Naive thymus-derived CD4-positive, alpha-beta T cell (primary cell): ENCODE measurements at regions of chr20 and their contacts with region 1.

Region 1: DNA sequence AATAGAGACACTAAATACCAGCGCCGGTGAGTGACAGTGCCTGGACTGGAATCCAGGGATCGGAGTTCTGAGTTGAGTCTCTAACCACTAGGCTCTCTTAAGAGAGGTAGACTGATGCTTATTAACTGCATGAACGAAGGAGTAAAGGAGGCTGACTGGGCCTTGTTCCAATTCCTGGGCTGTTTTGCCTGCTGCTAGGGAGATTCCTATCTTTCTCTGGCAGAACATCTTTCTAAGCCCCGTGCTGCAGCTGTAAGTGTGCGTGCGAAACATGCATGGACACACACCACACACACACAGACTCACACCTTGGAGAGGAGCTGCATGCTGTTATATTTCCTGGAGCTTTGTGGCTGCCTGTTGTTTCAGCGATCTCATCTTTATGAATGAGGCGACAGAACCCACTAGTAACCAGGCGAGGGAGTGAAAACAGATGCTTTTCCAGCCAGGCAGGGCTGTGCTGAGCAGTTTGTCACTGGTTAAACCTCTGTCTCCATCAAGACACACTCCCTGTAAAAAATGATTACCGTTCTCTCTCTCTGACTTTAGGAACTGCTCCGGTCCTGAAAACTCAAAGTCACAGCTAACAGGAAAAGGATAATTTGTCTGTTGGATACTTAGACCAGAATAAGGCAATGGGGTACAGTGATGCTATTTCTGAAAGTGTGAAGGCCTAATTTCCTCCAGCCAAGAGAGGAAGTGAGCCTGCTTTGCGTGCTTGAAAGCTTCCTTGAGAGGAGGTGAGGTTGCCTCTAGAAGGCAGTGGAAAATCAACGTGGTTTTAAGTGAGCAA is 157.4 kb upstream of the ZNF217 start:
- DNase-seq: peak in 8 of 9 donors; percentile 21 to 60 (median 40)
- ATAC-seq: peak; percentile 61
- H3K4me3 ChIP-seq: no peak overlapping the region
- H3K4me3 Mint-ChIP-seq: peak overlapping the region; percentile 51 to 84 (median 68)
- H3K27ac ChIP-seq: peak overlapping the region; percentile 63
- H3K27ac Mint-ChIP-seq: peak overlapping the region; percentile 91 to 99 (median 96)
- H3K4me1 ChIP-seq: peaks cover 53 to 66% of the 10 kb centered on the region in 2 donors
- H3K4me1 Mint-ChIP-seq: peaks cover 45 to 77% (median 72%) of the 10 kb centered on the region in 7 donors
- H3K27me3 ChIP-seq: no peaks in the 10 kb centered on the region
- H3K27me3 Mint-ChIP-seq: no peaks in the 10 kb centered on the region

Region 2: DNA sequence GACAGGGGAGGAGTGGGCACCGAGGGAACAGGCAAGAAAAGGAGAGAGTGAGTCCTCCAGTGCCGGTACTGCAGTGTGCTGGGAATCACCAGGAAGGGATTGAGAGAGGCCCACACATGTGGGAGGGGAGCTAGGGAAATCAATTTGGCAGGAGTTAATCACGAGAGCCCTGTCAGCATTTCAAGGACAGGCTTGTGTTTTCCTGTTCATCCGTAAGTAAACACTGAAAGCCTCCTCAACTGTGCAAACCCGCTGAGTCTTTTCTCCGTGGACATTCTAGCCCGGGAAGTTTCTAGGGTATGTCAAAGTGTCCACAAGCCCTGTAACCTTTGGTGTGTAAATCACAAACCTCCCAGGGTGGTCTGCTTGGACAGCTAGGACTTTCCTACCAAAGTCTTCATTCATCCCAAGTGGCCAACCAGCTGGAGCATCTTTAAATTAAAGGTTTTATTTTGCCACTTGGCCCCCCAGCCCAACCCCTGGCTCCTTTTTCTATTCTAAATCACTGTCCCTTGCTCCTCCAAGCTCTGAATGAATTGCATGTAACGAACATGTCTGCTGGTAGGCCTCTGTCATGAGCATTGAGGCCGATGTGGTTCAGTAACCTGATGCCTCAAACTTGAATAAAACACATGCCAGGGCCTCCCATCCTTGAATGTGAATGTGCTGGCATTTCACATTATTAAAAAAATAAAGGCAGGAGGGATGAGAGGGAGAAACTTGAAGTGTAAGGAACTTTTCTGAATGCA is 306.4 kb before region 1 on chr20:
- CTCF ChIA-PET with region 1: no interaction called
- POLR2A ChIA-PET with region 1: no interaction called
- intact Hi-C with region 1: no loop called
- DNase-seq: no peak
- ATAC-seq: no peak
- H3K4me3 ChIP-seq: no peak overlapping the region
- H3K4me3 Mint-ChIP-seq: no peak overlapping the region
- H3K27ac ChIP-seq: no peak overlapping the region
- H3K27ac Mint-ChIP-seq: no peak overlapping the region
- H3K4me1 ChIP-seq: no peaks in the 10 kb centered on the region
- H3K4me1 Mint-ChIP-seq: peaks cover 0 to 10% (median 0%) of the 10 kb centered on the region in 7 donors
- H3K27me3 ChIP-seq: no peaks in the 10 kb centered on the region
- H3K27me3 Mint-ChIP-seq: no peaks in the 10 kb centered on the region

Region 3: GRCh38 chr20:53578492-53579222 is 172.4 kb before region 1 on chr20:
- CTCF ChIA-PET with region 1: interaction called, 6 read pairs
- POLR2A ChIA-PET with region 1: interaction called, 4 read pairs
- intact Hi-C with region 1: loop called (anchors 1 kb)
- DNase-seq: peak in 8 of 9 donors; percentile 44 to 85 (median 80)
- ATAC-seq: peak; percentile 85
- H3K4me3 ChIP-seq: peak overlapping the region; percentile 49
- H3K4me3 Mint-ChIP-seq: peak overlapping the region; percentile 79 to 98 (median 86)
- H3K27ac ChIP-seq: peak overlapping the region; percentile 70
- H3K27ac Mint-ChIP-seq: peak overlapping the region; percentile 83 to 98 (median 94)
- H3K4me1 ChIP-seq: peaks cover 53 to 60% of the 10 kb centered on the region in 2 donors
- H3K4me1 Mint-ChIP-seq: peaks cover 41 to 99% (median 91%) of the 10 kb centered on the region in 7 donors
- H3K27me3 ChIP-seq: no peaks in the 10 kb centered on the region
- H3K27me3 Mint-ChIP-seq: no peaks in the 10 kb centered on the region

Region 4: GRCh38 chr20:53643031-53643832 is 107.8 kb before region 1 on chr20:
- CTCF ChIA-PET with region 1: no interaction called
- POLR2A ChIA-PET with region 1: interaction called, 5 read pairs
- intact Hi-C with region 1: loop called in 1 of 2 experiments (anchors 2 kb)
- DNase-seq: peak in 8 of 9 donors; percentile 61 to 81 (median 75)
- ATAC-seq: peak; percentile 98
- H3K4me3 ChIP-seq: peak overlapping the region; percentile 56
- H3K4me3 Mint-ChIP-seq: peak overlapping the region; percentile 73 to 92 (median 85)
- H3K27ac ChIP-seq: peak overlapping the region; percentile 77
- H3K27ac Mint-ChIP-seq: peak overlapping the region; percentile 90 to 100 (median 97)
- H3K4me1 ChIP-seq: peaks cover 13 to 45% of the 10 kb centered on the region in 2 donors
- H3K4me1 Mint-ChIP-seq: peaks cover 30 to 64% (median 52%) of the 10 kb centered on the region in 7 donors
- H3K27me3 ChIP-seq: no peaks in the 10 kb centered on the region
- H3K27me3 Mint-ChIP-seq: no peaks in the 10 kb centered on the region

Region 5: DNA sequence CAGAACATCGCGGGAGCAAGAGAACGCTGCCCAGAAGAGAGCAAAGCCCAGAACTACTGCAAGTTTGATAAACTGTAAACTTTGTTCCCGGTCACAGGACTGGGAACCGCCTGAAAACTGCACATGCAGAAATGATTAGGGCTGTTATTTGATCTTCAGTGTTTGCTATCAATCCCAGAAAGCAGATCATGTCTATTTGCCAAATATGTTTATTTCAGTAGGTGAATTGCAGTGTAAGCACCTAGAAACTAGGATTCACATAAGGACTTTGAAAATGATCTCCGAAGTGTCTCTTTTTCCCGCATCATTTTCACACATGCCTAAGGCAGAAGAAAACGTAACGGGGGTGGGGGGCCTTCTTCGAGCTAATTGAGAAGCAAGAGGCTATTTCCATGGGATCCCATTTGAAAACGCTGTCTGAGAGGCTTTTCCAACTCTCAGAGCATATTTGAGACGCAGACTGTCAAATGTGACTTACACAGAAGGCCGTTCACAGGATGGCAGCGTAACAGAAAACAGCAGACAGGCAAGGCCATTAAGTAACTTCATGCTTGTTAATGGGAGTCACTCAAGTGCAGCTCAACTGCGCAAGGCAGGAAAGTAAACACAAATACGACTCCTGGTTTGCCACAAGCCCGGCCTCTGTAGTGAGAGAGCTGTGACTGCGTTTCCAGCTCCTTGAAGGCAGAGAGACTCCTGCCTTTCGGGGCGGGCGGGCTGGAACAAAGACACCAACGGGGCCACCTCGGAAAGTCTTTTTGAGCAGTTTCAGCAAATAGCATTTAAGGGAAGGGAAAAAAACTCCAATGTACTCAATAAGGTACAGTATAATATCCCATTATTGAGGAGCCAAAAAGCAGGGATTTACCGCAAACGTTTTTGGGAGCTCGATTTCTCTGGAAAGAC is 12.7 kb before region 1 on chr20:
- CTCF ChIA-PET with region 1: interaction called, 3 read pairs
- POLR2A ChIA-PET with region 1: interaction called, 8 read pairs
- intact Hi-C with region 1: loop called in 1 of 2 experiments (anchors 1 kb)
- DNase-seq: no peak
- ATAC-seq: no peak
- H3K4me3 ChIP-seq: no peak overlapping the region
- H3K4me3 Mint-ChIP-seq: peak overlapping the region in 1 of 10 donors; percentile 70
- H3K27ac ChIP-seq: no peak overlapping the region
- H3K27ac Mint-ChIP-seq: peak overlapping the region in 5 of 9 donors; percentile 8 to 87 (median 43)
- H3K4me1 ChIP-seq: peaks cover 0 to 14% of the 10 kb centered on the region in 2 donors
- H3K4me1 Mint-ChIP-seq: peaks cover 28 to 68% (median 50%) of the 10 kb centered on the region in 7 donors
- H3K27me3 ChIP-seq: no peaks in the 10 kb centered on the region
- H3K27me3 Mint-ChIP-seq: no peaks in the 10 kb centered on the region

Region 6: DNA sequence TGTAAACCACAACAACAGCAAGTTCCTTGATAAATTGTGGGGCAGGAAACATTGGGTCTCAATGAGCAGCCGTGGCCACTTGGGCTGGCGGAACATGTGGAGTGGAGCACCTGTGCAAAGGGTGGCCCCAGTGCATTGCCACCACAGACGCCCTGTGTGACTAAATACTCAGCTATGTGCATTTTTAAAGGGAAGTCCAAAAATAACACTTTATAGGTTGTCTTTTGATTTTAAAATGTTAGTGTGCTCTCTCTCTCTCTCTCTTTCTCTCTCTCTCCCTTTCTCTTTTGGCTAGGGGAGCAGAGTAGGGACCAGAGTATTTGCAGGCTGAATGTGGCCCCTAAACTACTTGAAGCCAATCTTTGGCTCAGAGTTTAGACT is 83.0 kb after region 1 on chr20:
- CTCF ChIA-PET with region 1: no interaction called
- POLR2A ChIA-PET with region 1: interaction called, 3 read pairs
- intact Hi-C with region 1: loop called (anchors 2 to 5 kb)
- DNase-seq: no peak
- ATAC-seq: no peak
- H3K4me3 ChIP-seq: no peak overlapping the region
- H3K4me3 Mint-ChIP-seq: peak overlapping the region in 1 of 10 donors; percentile 18
- H3K27ac ChIP-seq: no peak overlapping the region
- H3K27ac Mint-ChIP-seq: peak overlapping the region in 7 of 9 donors; percentile 36 to 99 (median 89)
- H3K4me1 ChIP-seq: peaks cover 27 to 38% of the 10 kb centered on the region in 2 donors
- H3K4me1 Mint-ChIP-seq: peaks cover 32 to 71% (median 60%) of the 10 kb centered on the region in 7 donors
- H3K27me3 ChIP-seq: no peaks in the 10 kb centered on the region
- H3K27me3 Mint-ChIP-seq: no peaks in the 10 kb centered on the region

Region 7: GRCh38 chr20:53915446-53916172 is 164.6 kb after region 1 on chr20:
- CTCF ChIA-PET with region 1: interaction called, 10 read pairs
- POLR2A ChIA-PET with region 1: interaction called, 3 read pairs
- intact Hi-C with region 1: loop called (anchors 1 to 5 kb)
- DNase-seq: peak; percentile 70 to 90 (median 88)
- ATAC-seq: peak; percentile 99
- H3K4me3 ChIP-seq: peak overlapping the region; percentile 79
- H3K4me3 Mint-ChIP-seq: peak overlapping the region; percentile 88 to 97 (median 94)
- H3K27ac ChIP-seq: peak overlapping the region; percentile 70
- H3K27ac Mint-ChIP-seq: peak overlapping the region; percentile 82 to 95 (median 90)
- H3K4me1 ChIP-seq: peaks cover 5 to 7% of the 10 kb centered on the region in 2 donors
- H3K4me1 Mint-ChIP-seq: peaks cover 15 to 37% (median 23%) of the 10 kb centered on the region in 7 donors
- H3K27me3 ChIP-seq: no peaks in the 10 kb centered on the region
- H3K27me3 Mint-ChIP-seq: no peaks in the 10 kb centered on the region